Activated CD8-positive, alpha-beta memory T cell treated with anti-CD3 and anti-CD28 coated beads, Interleukin-2, amount 10 ng/mL, durations not matched to agents 7 days and 5 days (primary cell): ENCODE measurements at regions of chr2 and their contacts with region 1.

Region 1: DNA sequence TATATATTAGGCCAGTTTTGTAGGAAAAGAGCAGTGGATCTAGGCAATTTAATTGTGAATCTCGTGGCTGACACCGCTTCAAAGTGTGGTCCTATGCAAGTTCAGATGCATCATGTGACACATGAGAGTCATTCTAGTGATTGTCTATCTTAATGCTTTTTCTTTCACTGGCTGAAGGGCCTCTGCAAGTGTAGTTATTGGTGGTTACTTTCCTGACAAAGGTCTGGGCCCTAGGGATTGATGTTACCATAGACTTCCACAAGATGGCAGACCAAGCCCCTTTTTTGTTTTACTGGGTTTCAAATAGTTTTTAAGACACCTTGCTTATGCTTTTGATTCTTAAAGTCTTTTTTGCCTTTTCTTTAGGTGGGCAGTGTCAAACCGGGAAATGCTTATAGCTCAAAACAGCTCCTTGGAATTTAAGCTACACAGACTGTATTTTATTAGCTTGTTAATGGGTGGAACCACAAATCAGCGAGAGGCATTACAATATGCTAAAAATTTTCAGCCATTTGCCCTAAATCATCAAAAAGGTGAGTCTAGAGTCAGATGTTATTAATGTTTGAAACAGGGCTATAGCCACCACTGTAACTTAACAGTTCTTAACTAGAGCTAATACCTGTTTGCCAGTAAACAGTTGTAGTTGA is 25.9 kb downstream of the CD8A start:
- DNase-seq: peak; percentile 72
- ATAC-seq: peak; percentile 84
- H3K4me3 Mint-ChIP-seq: no peak overlapping the region
- H3K27ac Mint-ChIP-seq: peak overlapping the region; percentile 55
- H3K4me1 Mint-ChIP-seq: peaks cover 32% of the 10 kb centered on the region
- H3K27me3 Mint-ChIP-seq: no peaks in the 10 kb centered on the region

Region 2: GRCh38 chr2:86753606-86754005 is 11.2 kb before region 1 on chr2:
- CTCF ChIA-PET with region 1: interaction called, 10 read pairs
- DNase-seq: no peak
- ATAC-seq: no peak
- H3K4me3 Mint-ChIP-seq: no peak overlapping the region
- H3K27ac Mint-ChIP-seq: no peak overlapping the region
- H3K4me1 Mint-ChIP-seq: peaks cover 16% of the 10 kb centered on the region
- H3K27me3 Mint-ChIP-seq: no peaks in the 10 kb centered on the region

Region 3: DNA sequence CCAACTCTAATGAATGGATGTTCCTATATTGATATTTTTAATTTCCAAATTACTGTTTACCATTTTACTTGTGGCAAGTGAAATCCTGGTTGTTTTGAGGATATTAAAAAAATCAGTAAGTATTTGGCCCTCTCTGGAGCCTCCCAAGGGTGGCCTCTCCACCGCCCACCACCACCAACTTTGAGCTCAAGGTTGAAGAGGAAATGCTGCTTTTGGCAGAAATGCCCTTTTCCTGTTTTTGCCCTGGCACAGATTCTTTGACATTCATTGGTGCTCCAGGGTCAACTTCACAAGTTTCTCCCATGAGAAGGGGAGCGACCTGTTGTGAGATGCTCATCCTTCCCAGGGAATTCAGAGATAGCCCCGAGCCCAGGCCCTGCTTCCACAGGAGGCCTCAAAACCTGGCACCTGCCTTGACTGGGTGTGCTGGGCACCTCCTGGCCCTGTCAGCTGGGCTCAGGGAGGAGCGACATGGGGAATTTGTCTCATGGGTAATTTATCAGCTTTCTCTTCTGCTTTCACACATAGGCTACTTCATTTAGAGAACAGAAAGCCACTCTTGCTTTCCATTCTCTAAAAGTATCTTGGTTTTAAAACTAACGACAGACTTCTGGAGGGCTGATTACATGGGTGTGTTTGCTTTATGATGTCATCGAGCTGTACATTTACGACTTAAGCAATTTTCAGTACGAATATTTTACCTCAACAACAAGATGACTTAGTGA is 19.0 kb after region 1 on chr2:
- CTCF ChIA-PET with region 1: interaction called, 20 read pairs
- DNase-seq: no peak
- ATAC-seq: no peak
- H3K4me3 Mint-ChIP-seq: peak overlapping the region; percentile 27
- H3K27ac Mint-ChIP-seq: peak overlapping the region; percentile 100
- H3K4me1 Mint-ChIP-seq: peaks cover 57% of the 10 kb centered on the region
- H3K27me3 Mint-ChIP-seq: no peaks in the 10 kb centered on the region

Region 4: GRCh38 chr2:86790676-86791572 is 26.1 kb after region 1 on chr2 and contains the start of gene CD8A:
- CTCF ChIA-PET with region 1: interaction called, 17 read pairs
- DNase-seq: peak; percentile 92
- ATAC-seq: peak; percentile 43
- H3K4me3 Mint-ChIP-seq: peak within 1 kb of the TSS; percentile 92
- H3K27ac Mint-ChIP-seq: peak within 1 kb of the TSS; percentile 99
- H3K4me1 Mint-ChIP-seq: peaks cover 68% of the 10 kb centered on the region
- H3K27me3 Mint-ChIP-seq: no peaks in the 10 kb centered on the region
- total RNA-seq, gene CD8A: 686 to 756 TPM